PC-9 (cell line): ENCODE measurements at regions of chr2 and their contacts with region 1.

Region 1: GRCh38 chr2:49175831-49176230 is 21.5 kb upstream of the FSHR start:
- DNase-seq: no peak
- H3K4me3 ChIP-seq: no peak overlapping the region
- H3K27ac ChIP-seq: no peak overlapping the region
- H3K4me1 ChIP-seq: no peaks in the 10 kb centered on the region
- H3K27me3 ChIP-seq: 0 out of 2 replicates have a peak, but pooled peaks cover 3% of the 10 kb centered on the region
- CTCF ChIP-seq: no peak

Region 2: DNA sequence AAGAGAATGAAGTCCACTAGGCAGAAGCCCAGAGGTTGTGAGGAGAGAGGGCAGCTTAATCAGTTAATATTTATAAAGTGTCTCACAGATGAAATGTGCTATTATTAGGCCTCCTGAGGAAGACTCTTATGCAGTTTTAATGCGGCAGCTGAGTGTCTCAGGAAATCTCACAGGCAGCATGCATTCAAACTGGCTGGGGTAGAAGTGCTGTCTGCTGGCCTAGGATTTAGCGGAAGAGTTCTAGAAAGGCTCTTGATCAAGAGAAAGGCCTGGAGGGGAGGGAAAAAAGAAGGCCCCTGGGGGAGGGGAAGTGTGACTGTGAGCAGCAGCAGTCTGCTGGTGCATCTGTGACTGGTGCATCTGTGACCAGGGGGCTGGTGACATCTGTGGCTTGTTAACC is 154.6 kb before region 1 on chr2:
- CTCF ChIA-PET with region 1: no interaction called
- POLR2A ChIA-PET with region 1: no interaction called
- intact Hi-C with region 1: no loop called
- DNase-seq: no peak
- H3K4me3 ChIP-seq: no peak overlapping the region
- H3K27ac ChIP-seq: no peak overlapping the region
- H3K4me1 ChIP-seq: no peaks in the 10 kb centered on the region
- H3K27me3 ChIP-seq: 0 out of 2 replicates have a peak, but pooled peaks cover 4% of the 10 kb centered on the region
- CTCF ChIP-seq: no peak

Region 3: DNA sequence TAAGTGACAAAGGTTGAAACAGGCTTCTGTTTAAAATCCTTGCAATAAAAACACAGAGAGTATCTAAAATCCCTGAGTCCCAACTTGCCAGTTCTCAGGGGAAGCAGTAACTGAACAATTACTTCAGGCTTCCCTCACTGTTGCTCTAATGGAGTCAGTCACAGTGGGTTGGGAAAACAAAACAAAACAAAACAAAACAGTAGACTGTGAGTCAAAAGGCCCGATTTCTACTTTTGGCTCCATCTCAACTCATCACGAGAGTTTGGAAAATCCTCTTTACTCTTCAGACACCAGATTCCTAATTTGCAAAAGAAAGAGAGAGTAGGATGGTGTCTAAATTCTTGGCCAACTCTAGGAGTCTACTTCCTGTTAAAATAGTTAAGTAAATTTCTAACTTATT is 22.6 kb before region 1 on chr2:
- CTCF ChIA-PET with region 1: no interaction called
- POLR2A ChIA-PET with region 1: interaction called, 12 read pairs
- intact Hi-C with region 1: no loop called
- DNase-seq: no peak
- H3K4me3 ChIP-seq: no peak overlapping the region
- H3K27ac ChIP-seq: no peak overlapping the region
- H3K4me1 ChIP-seq: no peaks in the 10 kb centered on the region
- H3K27me3 ChIP-seq: peaks cover 6% of the 10 kb centered on the region; the same call in 1 of the 2 replicates
- CTCF ChIP-seq: no peak